Activated CD4-positive, alpha-beta T cell treated with anti-CD3 and anti-CD28 coated beads for 36 hours (primary cell): ENCODE measurements at regions of chr10 and their contacts with region 1.

Region 1: DNA sequence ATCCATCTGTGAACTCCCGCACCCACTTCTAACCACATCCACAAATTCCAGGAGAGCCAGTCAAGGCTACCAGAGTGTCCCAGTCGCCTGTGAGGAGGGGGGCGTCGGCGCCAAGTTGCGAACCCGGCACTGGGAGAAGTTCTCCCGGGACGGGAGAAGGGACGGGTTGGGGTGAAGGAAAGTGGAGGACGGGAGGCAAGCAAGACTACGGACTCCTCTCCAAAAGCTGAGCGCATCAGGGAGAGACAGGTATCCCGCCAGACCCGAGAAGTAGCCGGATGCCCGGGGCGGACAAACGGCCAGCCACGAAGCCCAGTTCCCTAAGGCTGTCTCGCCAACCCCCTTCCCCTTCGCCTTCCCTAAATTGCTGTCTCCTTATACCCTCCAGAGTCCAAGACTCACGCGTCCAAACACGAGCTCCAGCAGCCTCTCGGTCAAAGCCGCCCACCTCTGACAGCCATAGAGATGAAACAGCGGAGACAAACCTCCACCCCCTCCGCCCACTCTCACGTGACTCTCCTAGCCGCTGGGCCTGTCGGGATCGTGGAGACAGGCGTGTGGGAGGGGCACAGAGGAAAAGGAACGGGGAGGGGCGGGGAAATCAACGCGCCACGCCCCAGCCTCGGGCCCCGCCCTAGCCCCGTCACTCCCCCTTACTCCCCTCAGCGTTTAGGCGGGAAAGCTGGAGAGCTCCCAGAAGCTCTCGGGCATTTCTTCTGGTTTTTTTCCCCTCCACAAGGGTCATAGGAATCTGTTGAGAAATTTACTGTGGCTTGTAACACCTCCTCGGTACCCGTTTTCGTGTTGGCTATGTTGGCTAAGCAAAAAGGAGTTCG is at the start of gene MICU1:
- DNase-seq: peak; percentile 98
- ATAC-seq: peak; percentile 99
- H3K4me3 Mint-ChIP-seq: peak within 1 kb of the TSS; percentile 94
- H3K27ac Mint-ChIP-seq: peak within 1 kb of the TSS; percentile 91
- H3K4me1 Mint-ChIP-seq: peaks cover 7% of the 10 kb centered on the region
- H3K27me3 Mint-ChIP-seq: no peaks in the 10 kb centered on the region
- total RNA-seq, gene MICU1: 41.0 to 51.5 TPM

Region 2: GRCh38 chr10:71945819-71946474 is 679.9 kb before region 1 on chr10:
- CTCF ChIA-PET with region 1: no interaction called
- POLR2A ChIA-PET with region 1: no interaction called
- intact Hi-C with region 1: no loop called
- DNase-seq: no peak
- ATAC-seq: no peak
- H3K4me3 Mint-ChIP-seq: no peak overlapping the region
- H3K27ac Mint-ChIP-seq: no peak overlapping the region
- H3K4me1 Mint-ChIP-seq: no peaks in the 10 kb centered on the region
- H3K27me3 Mint-ChIP-seq: no peaks in the 10 kb centered on the region

Region 3: GRCh38 chr10:72354478-72355213 is 271.2 kb before region 1 on chr10 and contains the start of gene DNAJB12:
- CTCF ChIA-PET with region 1: no interaction called
- POLR2A ChIA-PET with region 1: no interaction called
- intact Hi-C with region 1: loop called in 1 of 2 experiments (anchors 1 kb)
- DNase-seq: peak; percentile 93
- ATAC-seq: peak; percentile 83
- H3K4me3 Mint-ChIP-seq: peak within 1 kb of the TSS; percentile 82
- H3K27ac Mint-ChIP-seq: peak within 1 kb of the TSS; percentile 98
- H3K4me1 Mint-ChIP-seq: peaks cover 35% of the 10 kb centered on the region
- H3K27me3 Mint-ChIP-seq: no peaks in the 10 kb centered on the region
- total RNA-seq, gene DNAJB12: 19.7 to 21.9 TPM